PC-9 (cell line): ENCODE measurements at regions of chr14 and their contacts with region 1.

Region 1: GRCh38 chr14:92793709-92794546 is at the start of gene GOLGA5:
- DNase-seq: peak; percentile 91 to 98
- H3K4me3 ChIP-seq: peak within 1 kb of the TSS; percentile 89
- H3K27ac ChIP-seq: peak within 1 kb of the TSS; percentile 87
- H3K4me1 ChIP-seq: peaks cover 26% of the 10 kb centered on the region
- H3K27me3 ChIP-seq: no peaks in the 10 kb centered on the region
- CTCF ChIP-seq: no peak
- total RNA-seq, gene GOLGA5: 17.2 and 22.6 TPM in 2 replicates

Region 2: GRCh38 chr14:92690171-92691036 is 103.5 kb before region 1 on chr14:
- CTCF ChIA-PET with region 1: no interaction called
- POLR2A ChIA-PET with region 1: interaction called, 12 read pairs
- intact Hi-C with region 1: no loop called
- DNase-seq: peak; percentile 39 to 43
- H3K4me3 ChIP-seq: no peak overlapping the region
- H3K27ac ChIP-seq: no peak overlapping the region
- H3K4me1 ChIP-seq: no peaks in the 10 kb centered on the region
- H3K27me3 ChIP-seq: no peaks in the 10 kb centered on the region
- CTCF ChIP-seq: peak; percentile 77

Region 3: DNA sequence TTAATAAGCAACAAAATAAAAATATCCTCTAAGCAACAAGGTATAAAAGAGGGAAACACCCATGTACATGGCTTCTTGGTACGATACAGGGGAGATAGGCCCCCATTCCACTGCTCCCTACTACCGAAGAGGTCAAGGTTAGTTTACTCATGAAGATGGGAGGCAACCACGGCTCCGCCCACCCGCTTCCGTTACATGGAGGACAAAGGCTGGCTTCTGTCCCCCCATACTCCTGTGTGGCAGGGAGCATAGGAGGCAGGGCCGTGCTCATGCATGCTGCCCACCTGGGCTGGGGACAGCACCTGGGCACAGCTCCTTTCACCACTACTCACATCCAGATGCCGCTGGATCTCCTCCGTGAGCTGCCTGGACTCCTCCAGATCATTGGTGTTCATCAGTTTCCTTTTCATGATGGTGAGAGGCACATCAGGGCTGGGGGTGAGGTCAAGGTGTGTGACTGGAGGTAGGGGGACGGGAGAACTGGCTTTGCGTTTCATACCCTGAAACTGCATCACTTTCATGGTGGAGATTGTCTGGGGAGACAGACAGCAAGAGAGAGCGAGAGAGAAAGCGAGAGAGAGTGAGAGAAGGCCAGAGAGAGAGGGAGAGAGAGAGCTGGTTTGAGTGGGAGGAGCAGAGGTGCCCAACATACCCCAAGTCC is 84.5 kb before region 1 on chr14:
- CTCF ChIA-PET with region 1: no interaction called
- POLR2A ChIA-PET with region 1: interaction called, 14 read pairs
- intact Hi-C with region 1: no loop called
- DNase-seq: no peak
- H3K4me3 ChIP-seq: no peak overlapping the region
- H3K27ac ChIP-seq: peak overlapping the region; percentile 25; the same call in 1 of the 2 replicates
- H3K4me1 ChIP-seq: peaks cover 12% of the 10 kb centered on the region
- H3K27me3 ChIP-seq: no peaks in the 10 kb centered on the region
- CTCF ChIP-seq: no peak

Region 4: DNA sequence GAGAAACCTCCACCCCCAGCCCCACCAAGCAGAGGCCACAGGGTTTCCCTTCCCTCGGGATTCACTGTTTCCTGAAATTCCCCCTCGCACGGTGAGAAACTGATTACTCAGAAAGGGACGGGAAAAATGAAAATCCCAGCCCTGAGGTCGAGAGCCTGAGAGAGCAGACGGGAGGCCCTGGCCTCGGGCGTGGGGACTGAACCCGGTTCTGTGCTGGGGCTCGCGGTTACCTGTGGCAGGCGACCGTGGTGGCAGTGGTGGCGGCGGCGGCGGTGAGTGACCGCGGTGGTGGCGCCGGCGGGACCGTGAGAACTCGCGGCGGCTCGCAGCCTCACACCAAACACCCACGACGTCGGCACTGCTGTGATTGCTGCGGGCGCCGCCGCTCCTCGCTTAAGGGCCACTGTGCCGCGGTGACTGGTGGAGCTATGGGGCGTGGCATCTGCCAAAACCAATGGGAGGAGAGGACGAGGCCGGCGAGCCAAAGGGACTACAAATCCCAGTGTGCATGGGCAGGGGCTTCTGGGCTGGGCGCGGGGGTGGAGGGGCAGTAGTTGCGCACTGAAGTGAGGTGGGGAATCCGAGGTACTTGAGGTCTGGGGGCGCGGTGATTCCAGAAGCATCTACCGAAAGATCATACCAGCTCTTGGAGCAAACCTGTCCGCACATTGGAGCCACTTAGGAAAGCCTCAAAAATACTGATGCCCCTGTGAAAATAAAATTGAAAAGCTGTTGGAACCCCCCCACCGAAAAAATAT is 45.5 kb before region 1 on chr14 and contains the start of gene LGMN:
- CTCF ChIA-PET with region 1: no interaction called
- POLR2A ChIA-PET with region 1: no interaction called
- intact Hi-C with region 1: loop called (anchors 5 kb)
- DNase-seq: peak; percentile 88
- H3K4me3 ChIP-seq: peak within 1 kb of the TSS; percentile 87
- H3K27ac ChIP-seq: peak within 1 kb of the TSS; percentile 11; the same call in 1 of the 2 replicates
- H3K4me1 ChIP-seq: peaks cover 13% of the 10 kb centered on the region
- H3K27me3 ChIP-seq: no peaks in the 10 kb centered on the region
- CTCF ChIP-seq: no peak
- total RNA-seq, gene LGMN: 48.8 and 50.8 TPM in 2 replicates